ENCODE measurements at regions of chrX and their contacts with region 1.

Region 1: DNA sequence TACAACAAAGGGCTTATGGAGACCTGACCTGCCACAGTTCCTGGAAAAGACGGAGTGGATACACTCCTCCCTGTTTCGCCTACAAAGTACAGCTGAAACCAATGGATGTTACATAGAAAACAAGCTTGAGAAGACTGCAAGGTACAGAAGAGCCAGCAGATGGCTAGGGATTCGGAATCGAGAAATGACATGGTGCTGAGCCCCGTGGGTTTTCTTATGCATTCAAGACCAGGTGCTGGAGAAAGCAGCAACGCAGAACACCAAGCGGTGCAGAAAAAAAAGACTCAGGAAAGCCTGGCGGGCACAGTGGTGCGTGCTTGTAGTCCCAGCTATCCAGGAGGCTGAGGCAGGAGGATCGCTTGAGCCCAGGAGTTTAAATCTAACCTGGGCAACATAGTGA is 13.8 kb downstream of the TIMM17B start:
- DNase-seq: no peak
- H3K4me3 ChIP-seq: no peak overlapping the region
- H3K27ac ChIP-seq: no peak overlapping the region
- H3K4me1 ChIP-seq: no peaks in the 10 kb centered on the region
- H3K27me3 ChIP-seq: peaks cover 0 to 14% of the 10 kb centered on the region in 2 donors
- CTCF ChIP-seq: no peak
- POLR2A ChIP-seq: no peak

Region 2: GRCh38 chrX:50565718-50566117 is 1682.0 kb after region 1 on chrX:
- intact Hi-C with region 1: loop called (anchors 10 kb)
- DNase-seq: no peak
- H3K4me3 ChIP-seq: no peak overlapping the region
- H3K27ac ChIP-seq: no peak overlapping the region
- H3K4me1 ChIP-seq: no peaks in the 10 kb centered on the region
- H3K27me3 ChIP-seq: peaks cover 0 to 20% of the 10 kb centered on the region in 2 donors
- CTCF ChIP-seq: no peak
- POLR2A ChIP-seq: no peak